ENCODE measurements at regions of chr1 and their contacts with region 1.

Region 1: GRCh38 chr1:39816415-39817090 is 27.9 kb upstream of the BMP8B start:
- DNase-seq: peak; percentile 71 to 77
- ATAC-seq: peak; percentile 80 to 97 (median 90)
- H3K4me3 ChIP-seq: no peak overlapping the region
- H3K27ac ChIP-seq: no peak overlapping the region
- H3K4me1 ChIP-seq: no peaks in the 10 kb centered on the region
- H3K27me3 ChIP-seq: peaks cover 0 to 2% (median 0%) of the 10 kb centered on the region in 3 donors
- CTCF ChIP-seq: peak; percentile 77

Region 2: GRCh38 chr1:39195166-39196111 is 621.1 kb before region 1 on chr1:
- intact Hi-C with region 1: no loop called
- DNase-seq: no peak
- ATAC-seq: no peak
- H3K4me3 ChIP-seq: no peak overlapping the region
- H3K27ac ChIP-seq: no peak overlapping the region
- H3K4me1 ChIP-seq: peaks cover 46% of the 10 kb centered on the region
- H3K27me3 ChIP-seq: no peaks in the 10 kb centered on the region
- CTCF ChIP-seq: no peak

Region 3: DNA sequence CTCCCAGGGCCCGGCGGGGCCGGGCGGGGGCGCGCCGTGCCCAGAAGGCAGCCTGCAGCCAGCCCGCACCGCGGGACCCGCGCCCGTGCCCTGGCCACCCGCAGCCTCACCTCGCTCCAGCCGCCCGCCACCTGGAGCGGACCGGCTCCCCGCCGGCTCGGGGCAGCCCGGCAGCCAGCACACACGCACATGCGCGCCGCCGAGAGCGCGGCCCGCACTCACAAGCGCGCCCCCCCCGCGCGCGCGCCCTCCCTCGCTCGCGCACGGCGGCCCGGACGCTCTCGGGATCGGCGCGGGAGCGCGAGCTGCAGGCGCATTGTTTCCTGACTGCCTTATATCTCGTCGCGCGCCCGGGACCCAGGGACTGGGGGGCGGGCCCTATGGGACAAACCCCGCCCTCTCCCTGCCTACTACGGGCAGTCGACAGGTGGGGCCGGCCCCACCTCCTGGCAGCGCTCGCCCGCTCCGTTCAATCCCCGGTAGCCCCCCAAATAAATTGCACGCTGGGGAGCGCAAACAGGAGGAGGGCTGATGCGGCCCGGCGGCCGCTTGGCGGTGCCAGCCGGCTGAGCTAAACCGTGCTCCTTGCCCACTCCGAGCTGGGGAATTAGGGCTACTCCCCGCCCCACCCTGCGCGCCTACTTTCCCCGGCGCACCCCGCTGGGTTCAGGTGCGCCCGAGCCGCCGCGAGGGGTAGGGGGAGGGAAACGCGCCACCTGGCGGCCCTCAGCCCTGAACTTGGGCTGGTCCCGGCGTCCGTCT is 85.3 kb after region 1 on chr1 and contains the start of gene MYCL:
- intact Hi-C with region 1: loop called (anchors 2 to 5 kb)
- DNase-seq: peak; percentile 59 to 80
- ATAC-seq: peak; percentile 79 to 93 (median 86)
- H3K4me3 ChIP-seq: peak within 1 kb of the TSS; percentile 75
- H3K27ac ChIP-seq: no peak within 1 kb of the TSS
- H3K4me1 ChIP-seq: peaks cover 7% of the 10 kb centered on the region
- H3K27me3 ChIP-seq: peaks cover 0 to 15% (median 7%) of the 10 kb centered on the region in 3 donors
- CTCF ChIP-seq: peak; percentile 67
- total RNA-seq, gene MYCL: 0.19 to 1.7 (median 0.60) TPM

Region 4: GRCh38 chr1:39973503-39974135 is 157.1 kb after region 1 on chr1:
- intact Hi-C with region 1: loop called (anchors 1 kb)
- DNase-seq: peak; percentile 72 to 86
- ATAC-seq: peak; percentile 77 to 87 (median 80)
- H3K4me3 ChIP-seq: no peak overlapping the region
- H3K27ac ChIP-seq: no peak overlapping the region
- H3K4me1 ChIP-seq: no peaks in the 10 kb centered on the region
- H3K27me3 ChIP-seq: no peaks in the 10 kb centered on the region
- CTCF ChIP-seq: peak; percentile 98

Region 5: GRCh38 chr1:40032240-40032891 is 215.8 kb after region 1 on chr1:
- intact Hi-C with region 1: loop called in 1 of 2 experiments (anchors 5 kb)
- DNase-seq: peak; percentile 21 to 63
- ATAC-seq: peak; percentile 32 to 67 (median 62)
- H3K4me3 ChIP-seq: no peak overlapping the region
- H3K27ac ChIP-seq: peak overlapping the region; percentile 12
- H3K4me1 ChIP-seq: peaks cover 30% of the 10 kb centered on the region
- H3K27me3 ChIP-seq: no peaks in the 10 kb centered on the region
- CTCF ChIP-seq: peak; percentile 44

Measured in psoas muscle (tissue), 8 donors.